ENCODE measurements at regions of chr7 and their contacts with region 1.

Region 1: DNA sequence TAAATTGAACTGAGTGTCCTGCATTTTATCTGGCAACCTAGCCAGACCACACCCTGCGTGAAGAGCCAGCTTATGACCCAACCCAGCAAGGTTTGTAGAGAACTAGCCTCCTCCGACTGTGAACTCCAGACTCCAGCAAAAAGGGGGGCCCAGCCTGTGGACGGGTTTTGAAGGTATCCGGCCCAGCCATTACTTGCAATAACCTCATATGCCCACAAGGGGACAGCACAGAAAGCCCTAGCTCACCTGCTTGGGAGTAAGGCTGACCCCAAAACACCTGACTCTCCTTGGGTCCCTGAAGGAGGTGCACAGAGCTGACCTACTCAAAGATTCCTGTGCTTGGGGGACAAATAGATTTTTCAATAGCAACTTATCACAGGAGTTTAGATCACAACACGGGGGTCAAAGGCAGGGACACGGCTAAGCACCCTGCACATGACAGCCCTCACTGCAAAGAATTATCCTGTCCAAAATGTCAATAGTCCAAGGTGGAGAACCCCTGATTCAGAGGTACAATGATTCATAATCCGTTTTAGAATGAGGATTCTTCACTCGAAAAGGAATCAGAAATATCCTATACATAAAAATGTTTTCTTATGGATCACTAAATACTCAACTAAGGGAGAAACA is 4.6 kb downstream of the TRPV6 start:
- DNase-seq: peak; percentile 68
- ATAC-seq: peak; percentile 42; the same call in 1 of the 2 replicates
- H3K4me3 ChIP-seq: no peak overlapping the region
- H3K27ac ChIP-seq: no peak overlapping the region
- H3K4me1 ChIP-seq: 0 out of 2 replicates have a peak, but pooled peaks cover 8% of the 10 kb centered on the region
- H3K27me3 ChIP-seq: peaks cover 22% of the 10 kb centered on the region
- CTCF ChIP-seq: peak; percentile 88

Region 2: DNA sequence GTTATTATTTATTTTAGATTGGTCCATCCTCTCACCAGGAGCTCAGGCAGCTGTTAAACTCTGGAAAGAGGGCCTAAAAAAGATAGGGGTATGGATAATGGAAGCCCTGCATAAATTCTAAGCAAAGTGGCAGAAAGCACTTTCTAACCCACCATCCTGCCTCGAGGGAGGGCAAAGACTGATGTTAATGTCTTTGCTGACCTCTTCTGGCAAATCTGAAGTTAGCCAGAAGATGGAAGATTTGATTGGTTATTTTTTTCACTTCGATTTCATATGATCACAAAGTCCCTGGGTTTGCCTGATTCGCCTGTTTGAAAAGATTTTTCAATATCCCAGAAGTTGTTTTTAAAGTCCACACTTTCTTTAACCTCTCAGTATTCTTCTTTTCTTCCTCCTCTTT is 121.1 kb after region 1 on chr7:
- CTCF ChIA-PET with region 1: no interaction called
- POLR2A ChIA-PET with region 1: no interaction called
- intact Hi-C with region 1: loop called (anchors 1 kb)
- DNase-seq: peak; percentile 53
- ATAC-seq: peak; percentile 70
- H3K4me3 ChIP-seq: peak overlapping the region; percentile 64; the same call in 1 of the 2 replicates
- H3K27ac ChIP-seq: no peak overlapping the region
- H3K4me1 ChIP-seq: peaks cover 10% of the 10 kb centered on the region; the same call in 1 of the 2 replicates
- H3K27me3 ChIP-seq: peaks cover 33% of the 10 kb centered on the region
- CTCF ChIP-seq: peak; percentile 64